Activated naive CD4-positive, alpha-beta T cell treated with anti-CD3 and anti-CD28 coated beads, Interleukin-2, amount 10 ng/mL, durations not matched to agents 7 days and 5 days (primary cell): ENCODE measurements at regions of chr18 and their contacts with region 1.

Region 1: GRCh38 chr18:46148810-46149209 is 44.6 kb downstream of the HAUS1 start:
- DNase-seq: peak; percentile 69
- H3K4me3 Mint-ChIP-seq: no peak overlapping the region
- H3K27ac Mint-ChIP-seq: peak overlapping the region; percentile 75
- H3K4me1 Mint-ChIP-seq: peaks cover 50% of the 10 kb centered on the region
- H3K27me3 Mint-ChIP-seq: no peaks in the 10 kb centered on the region

Region 2: DNA sequence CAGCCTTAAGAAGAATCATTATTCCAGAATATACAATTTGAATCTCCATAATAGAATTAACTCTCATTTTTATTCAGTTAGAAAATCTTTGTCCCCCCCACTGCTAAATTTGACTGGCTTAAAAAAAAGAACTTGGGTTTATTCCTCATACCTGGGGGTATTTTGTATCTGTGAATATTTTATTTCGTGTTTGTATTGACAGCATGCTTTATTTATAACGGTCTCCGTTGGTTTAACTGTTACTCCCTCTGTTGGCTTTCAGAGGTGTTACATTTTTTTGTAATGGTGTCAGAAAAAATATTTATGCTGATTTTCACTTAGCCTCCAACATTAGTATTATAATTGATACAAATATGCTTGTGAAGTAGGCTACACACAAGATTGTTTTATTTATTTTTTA is 64.5 kb after region 1 on chr18:
- CTCF ChIA-PET with region 1: interaction called, 17 read pairs
- DNase-seq: no peak
- H3K4me3 Mint-ChIP-seq: no peak overlapping the region
- H3K27ac Mint-ChIP-seq: peak overlapping the region; percentile 70
- H3K4me1 Mint-ChIP-seq: peaks cover 79% of the 10 kb centered on the region
- H3K27me3 Mint-ChIP-seq: no peaks in the 10 kb centered on the region

Region 3: GRCh38 chr18:46622999-46623398 is 474.2 kb after region 1 on chr18:
- CTCF ChIA-PET with region 1: interaction called, 14 read pairs
- DNase-seq: no peak
- H3K4me3 Mint-ChIP-seq: no peak overlapping the region
- H3K27ac Mint-ChIP-seq: peak overlapping the region; percentile 88
- H3K4me1 Mint-ChIP-seq: peaks cover 43% of the 10 kb centered on the region
- H3K27me3 Mint-ChIP-seq: peaks cover 23% of the 10 kb centered on the region